CD8-positive, alpha-beta T cell (primary cell): ENCODE measurements at regions of chr12 and their contacts with region 1.

Region 1: GRCh38 chr12:71663561-71664294 is at the start of gene ZFC3H1:
- DNase-seq: peak; percentile 76 to 99 (median 88)
- ATAC-seq: peak; percentile 74
- H3K4me3 ChIP-seq: peak within 1 kb of the TSS; percentile 79 to 94
- H3K4me3 Mint-ChIP-seq: peak within 1 kb of the TSS; percentile 100
- H3K27ac ChIP-seq: peak within 1 kb of the TSS; percentile 92 to 97
- H3K27ac Mint-ChIP-seq: peak within 1 kb of the TSS; percentile 100
- H3K4me1 ChIP-seq: peaks cover 36% of the 10 kb centered on the region
- H3K4me1 Mint-ChIP-seq: peaks cover 55% of the 10 kb centered on the region
- H3K27me3 ChIP-seq: no peaks in the 10 kb centered on the region
- H3K27me3 Mint-ChIP-seq: no peaks in the 10 kb centered on the region
- CTCF ChIP-seq: no peak
- total RNA-seq, gene ZFC3H1: 118 to 121 TPM

Region 2: DNA sequence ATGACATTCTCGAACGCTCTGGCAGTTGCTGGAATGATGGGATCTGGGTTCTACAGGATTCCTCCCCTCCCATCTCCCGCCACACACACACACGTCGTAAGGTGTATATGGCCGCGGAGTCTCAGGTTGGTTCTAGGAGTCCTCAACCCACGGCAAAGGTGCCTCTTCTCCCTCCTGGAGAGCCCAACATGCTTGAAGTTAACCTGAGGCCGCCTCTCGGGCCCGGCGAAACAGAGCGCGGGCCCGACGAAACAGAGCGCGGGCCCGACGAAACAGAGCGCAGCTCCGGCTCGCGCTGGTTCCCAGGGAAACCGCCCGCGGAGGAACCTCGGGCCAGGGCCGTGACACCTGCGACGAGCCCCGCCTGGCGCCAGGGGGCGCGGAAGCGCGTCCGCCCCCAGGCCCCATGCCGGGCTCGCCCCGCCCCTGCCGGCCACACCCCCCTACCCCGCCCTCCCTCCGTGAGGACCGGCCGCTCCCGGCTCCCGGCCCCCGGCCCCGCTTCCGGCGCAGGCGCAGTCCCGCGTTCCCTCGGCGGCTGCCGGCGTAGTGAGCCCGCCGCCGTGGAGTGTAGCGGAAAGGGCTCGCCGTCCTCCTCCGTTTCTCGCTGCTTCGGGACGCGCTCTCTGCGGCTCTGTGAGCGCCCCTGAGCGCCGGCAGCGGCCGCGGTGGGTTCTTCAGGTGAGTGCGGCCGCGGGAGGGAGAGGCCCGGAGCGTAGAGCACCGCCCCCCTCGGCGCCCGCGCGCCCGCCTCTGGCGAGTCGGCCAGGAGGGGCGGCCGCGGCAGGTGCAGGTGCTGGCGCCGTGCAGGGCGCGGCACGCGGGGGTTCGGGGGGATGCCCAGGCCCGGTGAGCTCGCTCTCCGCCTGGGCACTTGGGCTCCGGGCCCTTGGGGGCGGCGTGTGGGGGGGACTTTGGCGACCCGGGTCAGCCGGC is 1925.1 kb before region 1 on chr12 and contains the start of gene RAB3IP:
- CTCF ChIA-PET with region 1: no interaction called
- POLR2A ChIA-PET with region 1: no interaction called
- intact Hi-C with region 1: loop called (anchors 1 to 10 kb)
- DNase-seq: peak; percentile 84 to 95 (median 93)
- ATAC-seq: peak; percentile 87
- H3K4me3 ChIP-seq: peak within 1 kb of the TSS; percentile 64 to 79
- H3K4me3 Mint-ChIP-seq: peak within 1 kb of the TSS; percentile 82
- H3K27ac ChIP-seq: peak within 1 kb of the TSS; percentile 73
- H3K27ac Mint-ChIP-seq: peak within 1 kb of the TSS; percentile 69
- H3K4me1 ChIP-seq: peaks cover 11% of the 10 kb centered on the region
- H3K4me1 Mint-ChIP-seq: peaks cover 24% of the 10 kb centered on the region
- H3K27me3 ChIP-seq: no peaks in the 10 kb centered on the region
- H3K27me3 Mint-ChIP-seq: peaks cover 4% of the 10 kb centered on the region
- CTCF ChIP-seq: peak; percentile 89
- total RNA-seq, gene RAB3IP: 14.8 to 15.1 TPM

Region 3: DNA sequence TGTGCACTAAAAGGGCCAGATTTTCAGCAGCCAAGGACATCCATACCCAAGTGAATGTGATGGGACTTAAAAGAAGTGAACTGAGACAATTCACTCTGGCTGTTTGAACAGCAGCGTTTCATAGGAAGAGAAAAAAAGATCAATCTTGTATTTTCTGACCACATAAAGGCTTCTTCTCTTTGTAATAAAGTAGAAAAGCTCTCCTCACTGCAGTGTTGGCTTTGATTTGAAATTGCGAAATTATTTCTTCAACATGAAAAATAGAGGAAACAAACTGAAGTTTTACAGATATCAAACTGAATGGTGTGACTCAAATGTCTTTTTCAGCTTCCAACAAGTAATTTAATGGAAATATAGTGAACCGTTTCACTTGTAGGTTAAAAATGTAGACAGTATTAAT is 1308.9 kb before region 1 on chr12:
- CTCF ChIA-PET with region 1: no interaction called
- POLR2A ChIA-PET with region 1: no interaction called
- intact Hi-C with region 1: no loop called
- DNase-seq: peak in 1 of 9 experiments; percentile 13
- ATAC-seq: no peak
- H3K4me3 ChIP-seq: no peak overlapping the region
- H3K4me3 Mint-ChIP-seq: no peak overlapping the region
- H3K27ac ChIP-seq: no peak overlapping the region
- H3K27ac Mint-ChIP-seq: no peak overlapping the region
- H3K4me1 ChIP-seq: peaks cover 6% of the 10 kb centered on the region
- H3K4me1 Mint-ChIP-seq: peaks cover 18% of the 10 kb centered on the region
- H3K27me3 ChIP-seq: no peaks in the 10 kb centered on the region
- H3K27me3 Mint-ChIP-seq: no peaks in the 10 kb centered on the region
- CTCF ChIP-seq: no peak

Region 4: DNA sequence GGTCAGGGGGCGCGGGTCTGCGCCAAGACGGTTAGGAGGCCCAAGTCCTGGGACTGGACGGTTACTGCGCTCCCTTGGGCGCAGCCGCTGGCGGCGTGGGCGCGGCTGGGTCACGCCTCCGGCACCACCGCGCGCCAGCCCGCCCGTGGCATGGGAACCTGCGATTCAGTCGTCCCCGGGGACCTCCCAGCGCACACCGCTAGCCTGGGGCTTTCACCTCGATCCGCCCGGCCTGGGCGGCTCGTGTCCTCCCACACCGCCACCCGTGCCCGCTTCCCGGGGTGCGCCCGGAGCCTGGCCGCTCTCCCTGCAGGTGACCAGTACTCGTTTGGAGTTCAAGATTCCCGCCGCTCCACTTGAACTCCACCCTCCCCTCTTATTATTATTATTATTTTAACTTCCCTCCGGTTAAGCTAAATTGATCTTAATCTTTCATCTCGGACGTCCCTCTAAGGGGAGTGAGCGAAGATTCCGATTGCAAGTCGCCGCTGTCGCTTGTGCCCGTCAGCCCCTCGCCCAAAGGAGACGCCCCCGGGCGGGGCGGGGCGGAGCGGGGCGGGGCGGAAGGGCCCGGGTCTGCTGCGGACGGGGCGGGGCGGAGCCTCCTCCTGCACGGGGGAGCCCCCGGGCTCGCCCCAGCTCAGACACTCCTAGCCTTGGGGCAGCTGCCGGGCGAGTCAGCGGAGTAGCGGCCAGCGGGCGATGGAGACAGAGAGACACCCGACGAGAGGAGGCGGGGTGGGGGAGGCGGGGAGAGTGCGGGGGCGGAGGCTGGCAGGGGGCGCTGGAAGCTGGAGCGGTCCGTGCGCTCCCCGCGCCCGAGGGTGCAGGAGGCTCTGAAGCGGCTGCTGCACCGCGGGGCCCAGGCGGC is 1297.8 kb before region 1 on chr12 and contains the start of gene KCNMB4:
- CTCF ChIA-PET with region 1: no interaction called
- POLR2A ChIA-PET with region 1: no interaction called
- intact Hi-C with region 1: loop called in 1 of 2 experiments (anchors 10 kb)
- DNase-seq: peak; percentile 16 to 81 (median 67)
- ATAC-seq: peak; percentile 70
- H3K4me3 ChIP-seq: peak within 1 kb of the TSS; percentile 72 to 79
- H3K4me3 Mint-ChIP-seq: peak within 1 kb of the TSS; percentile 95
- H3K27ac ChIP-seq: peak within 1 kb of the TSS in 1 of 2 experiments; percentile 34
- H3K27ac Mint-ChIP-seq: peak within 1 kb of the TSS; percentile 91
- H3K4me1 ChIP-seq: peaks cover 22% of the 10 kb centered on the region
- H3K4me1 Mint-ChIP-seq: peaks cover 31% of the 10 kb centered on the region
- H3K27me3 ChIP-seq: no peaks in the 10 kb centered on the region
- H3K27me3 Mint-ChIP-seq: no peaks in the 10 kb centered on the region
- CTCF ChIP-seq: no peak
- total RNA-seq, gene KCNMB4: 0.73 to 1.4 TPM

Region 5: DNA sequence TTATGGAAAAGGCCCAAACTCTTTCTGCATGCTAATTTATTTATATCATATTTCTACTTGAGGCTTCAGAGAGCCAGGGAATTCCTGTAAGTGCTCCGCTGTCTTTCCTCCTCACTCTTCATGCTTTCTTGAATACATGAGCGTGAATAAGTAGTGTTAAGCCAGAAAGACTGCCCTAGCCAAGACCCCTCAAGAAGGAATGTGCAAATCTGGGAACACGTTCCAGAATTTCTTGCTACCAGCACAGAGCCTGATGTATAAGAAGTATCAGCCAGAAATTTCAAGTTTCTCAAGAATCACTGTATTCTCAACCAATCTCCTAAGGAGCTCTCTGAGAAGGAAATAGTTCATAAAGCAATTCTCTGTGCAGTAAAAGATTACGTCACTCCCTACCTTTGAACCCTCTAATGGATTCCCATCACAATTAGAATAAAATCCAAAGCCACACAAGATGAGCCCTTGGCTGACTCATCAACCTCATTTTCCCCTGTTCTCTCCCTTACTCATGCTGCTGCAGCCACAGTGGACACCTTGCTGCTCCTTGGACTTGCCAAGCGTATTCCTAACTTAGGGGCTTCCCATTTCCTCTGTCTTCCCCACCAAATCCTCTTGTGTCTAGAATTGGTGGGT is 499.0 kb before region 1 on chr12:
- CTCF ChIA-PET with region 1: no interaction called
- POLR2A ChIA-PET with region 1: no interaction called
- intact Hi-C with region 1: no loop called
- DNase-seq: no peak
- ATAC-seq: no peak
- H3K4me3 ChIP-seq: no peak overlapping the region
- H3K4me3 Mint-ChIP-seq: no peak overlapping the region
- H3K27ac ChIP-seq: no peak overlapping the region
- H3K27ac Mint-ChIP-seq: no peak overlapping the region
- H3K4me1 ChIP-seq: no peaks in the 10 kb centered on the region
- H3K4me1 Mint-ChIP-seq: no peaks in the 10 kb centered on the region
- H3K27me3 ChIP-seq: no peaks in the 10 kb centered on the region
- H3K27me3 Mint-ChIP-seq: no peaks in the 10 kb centered on the region
- CTCF ChIP-seq: no peak

Region 6: GRCh38 chr12:71642264-71642663 is 21.5 kb before region 1 on chr12:
- CTCF ChIA-PET with region 1: interaction called, 5 read pairs
- POLR2A ChIA-PET with region 1: interaction called, 20 read pairs
- intact Hi-C with region 1: loop called in 1 of 2 experiments (anchors 2 kb)
- DNase-seq: no peak
- ATAC-seq: no peak
- H3K4me3 ChIP-seq: no peak overlapping the region
- H3K4me3 Mint-ChIP-seq: no peak overlapping the region
- H3K27ac ChIP-seq: no peak overlapping the region
- H3K27ac Mint-ChIP-seq: no peak overlapping the region
- H3K4me1 ChIP-seq: peaks cover 7% of the 10 kb centered on the region
- H3K4me1 Mint-ChIP-seq: peaks cover 26% of the 10 kb centered on the region
- H3K27me3 ChIP-seq: no peaks in the 10 kb centered on the region
- H3K27me3 Mint-ChIP-seq: no peaks in the 10 kb centered on the region
- CTCF ChIP-seq: no peak

Region 7: GRCh38 chr12:71685914-71686665 is 22.4 kb after region 1 on chr12 and contains the start of gene TMEM19:
- CTCF ChIA-PET with region 1: interaction called, 13 read pairs
- POLR2A ChIA-PET with region 1: interaction called, 135 read pairs
- intact Hi-C with region 1: loop called (anchors 1 kb)
- DNase-seq: peak; percentile 65 to 92 (median 83)
- ATAC-seq: peak; percentile 88
- H3K4me3 ChIP-seq: peak within 1 kb of the TSS; percentile 66 to 95
- H3K4me3 Mint-ChIP-seq: peak within 1 kb of the TSS; percentile 96
- H3K27ac ChIP-seq: peak within 1 kb of the TSS; percentile 71 to 74
- H3K27ac Mint-ChIP-seq: peak within 1 kb of the TSS; percentile 94
- H3K4me1 ChIP-seq: peaks cover 33% of the 10 kb centered on the region
- H3K4me1 Mint-ChIP-seq: peaks cover 45% of the 10 kb centered on the region
- H3K27me3 ChIP-seq: no peaks in the 10 kb centered on the region
- H3K27me3 Mint-ChIP-seq: no peaks in the 10 kb centered on the region
- CTCF ChIP-seq: no peak
- total RNA-seq, gene TMEM19: 8.8 to 10.0 TPM

Region 8: GRCh38 chr12:71840231-71840847 is 176.6 kb after region 1 on chr12:
- CTCF ChIA-PET with region 1: interaction called, 4 read pairs
- POLR2A ChIA-PET with region 1: interaction called, 22 read pairs
- intact Hi-C with region 1: loop called (anchors 1 to 5 kb)
- DNase-seq: peak in 3 of 9 experiments; percentile 8 to 39 (median 18)
- ATAC-seq: peak; percentile 21
- H3K4me3 ChIP-seq: peak overlapping the region; percentile 64 to 79
- H3K4me3 Mint-ChIP-seq: peak overlapping the region; percentile 92
- H3K27ac ChIP-seq: peak overlapping the region; percentile 93 to 98
- H3K27ac Mint-ChIP-seq: peak overlapping the region; percentile 98
- H3K4me1 ChIP-seq: peaks cover 32% of the 10 kb centered on the region
- H3K4me1 Mint-ChIP-seq: peaks cover 46% of the 10 kb centered on the region
- H3K27me3 ChIP-seq: no peaks in the 10 kb centered on the region
- H3K27me3 Mint-ChIP-seq: no peaks in the 10 kb centered on the region
- CTCF ChIP-seq: no peak

Region 9: DNA sequence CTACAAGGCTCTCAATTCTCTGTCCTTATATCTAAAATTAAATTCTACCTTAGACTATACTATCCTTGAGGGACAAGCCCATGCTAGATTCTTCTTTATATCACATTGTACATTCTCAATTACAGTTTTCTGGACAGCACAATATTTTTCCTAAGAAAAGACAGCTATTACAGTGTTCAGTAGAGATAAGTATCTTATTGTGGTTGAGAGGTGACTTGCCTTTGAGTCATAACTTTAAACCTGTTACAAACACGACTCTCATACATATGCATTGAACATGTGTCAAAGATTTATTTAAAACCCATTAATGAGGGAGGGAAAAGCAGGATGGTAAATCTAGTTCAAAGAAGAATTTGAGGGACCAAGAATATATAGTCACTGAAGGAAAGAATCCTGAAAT is 336.1 kb after region 1 on chr12:
- CTCF ChIA-PET with region 1: no interaction called
- POLR2A ChIA-PET with region 1: no interaction called
- intact Hi-C with region 1: no loop called
- DNase-seq: no peak
- ATAC-seq: no peak
- H3K4me3 ChIP-seq: no peak overlapping the region
- H3K4me3 Mint-ChIP-seq: no peak overlapping the region
- H3K27ac ChIP-seq: no peak overlapping the region
- H3K27ac Mint-ChIP-seq: no peak overlapping the region
- H3K4me1 ChIP-seq: no peaks in the 10 kb centered on the region
- H3K4me1 Mint-ChIP-seq: no peaks in the 10 kb centered on the region
- H3K27me3 ChIP-seq: peaks cover 0 to 2% of the 10 kb centered on the region in 2 experiments
- H3K27me3 Mint-ChIP-seq: peaks cover 9% of the 10 kb centered on the region
- CTCF ChIP-seq: no peak